ENCODE measurements at regions of chr12 and their contacts with region 1.

Region 1: GRCh38 chr12:130838951-130839769 is at the start of gene STX2:
- DNase-seq: peak; percentile 79
- H3K4me3 Mint-ChIP-seq: peak within 1 kb of the TSS; percentile 68
- H3K27ac Mint-ChIP-seq: no peak within 1 kb of the TSS
- H3K4me1 Mint-ChIP-seq: peaks cover 16% of the 10 kb centered on the region
- H3K27me3 Mint-ChIP-seq: no peaks in the 10 kb centered on the region
- CTCF ChIP-seq: peak; percentile 23
- total RNA-seq, gene STX2: 19.0 and 21.6 TPM in 2 replicates

Region 2: DNA sequence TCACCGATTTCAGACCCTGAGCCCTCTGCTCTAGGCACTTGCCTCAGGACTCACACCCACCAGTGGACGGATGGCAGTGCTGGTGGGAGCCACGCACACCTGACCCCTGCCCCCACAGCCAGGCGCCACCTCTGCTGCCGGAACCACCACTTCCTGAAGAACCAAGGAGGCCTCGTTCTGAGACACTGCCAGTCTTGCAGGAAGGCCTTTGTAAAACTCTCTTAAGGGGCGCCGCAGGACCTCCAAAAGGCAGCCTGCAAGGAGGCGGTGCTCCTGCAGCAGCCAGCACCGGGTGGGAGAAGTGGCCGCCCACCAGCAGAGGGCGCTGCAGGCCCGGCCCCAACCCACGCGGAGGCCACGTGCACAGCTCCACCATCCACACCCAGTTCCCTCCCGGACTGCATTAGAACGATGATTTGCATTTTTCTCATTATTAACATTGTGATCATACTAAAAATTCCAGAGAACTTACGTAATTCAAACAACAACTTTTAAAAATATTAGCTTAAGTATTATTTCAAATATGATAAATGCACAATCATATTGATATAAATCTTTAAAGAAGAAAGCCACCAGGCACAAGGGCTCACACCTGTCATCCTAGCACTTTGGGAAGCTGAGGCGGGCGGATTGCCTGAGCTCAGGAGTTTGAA is 12.9 kb before region 1 on chr12:
- CTCF ChIA-PET with region 1: interaction called, 20 read pairs
- POLR2A ChIA-PET with region 1: interaction called, 4 read pairs
- intact Hi-C with region 1: no loop called
- DNase-seq: peak; percentile 37
- H3K4me3 Mint-ChIP-seq: no peak overlapping the region
- H3K27ac Mint-ChIP-seq: no peak overlapping the region
- H3K4me1 Mint-ChIP-seq: no peaks in the 10 kb centered on the region
- H3K27me3 Mint-ChIP-seq: no peaks in the 10 kb centered on the region
- CTCF ChIP-seq: peak; percentile 38

Region 3: DNA sequence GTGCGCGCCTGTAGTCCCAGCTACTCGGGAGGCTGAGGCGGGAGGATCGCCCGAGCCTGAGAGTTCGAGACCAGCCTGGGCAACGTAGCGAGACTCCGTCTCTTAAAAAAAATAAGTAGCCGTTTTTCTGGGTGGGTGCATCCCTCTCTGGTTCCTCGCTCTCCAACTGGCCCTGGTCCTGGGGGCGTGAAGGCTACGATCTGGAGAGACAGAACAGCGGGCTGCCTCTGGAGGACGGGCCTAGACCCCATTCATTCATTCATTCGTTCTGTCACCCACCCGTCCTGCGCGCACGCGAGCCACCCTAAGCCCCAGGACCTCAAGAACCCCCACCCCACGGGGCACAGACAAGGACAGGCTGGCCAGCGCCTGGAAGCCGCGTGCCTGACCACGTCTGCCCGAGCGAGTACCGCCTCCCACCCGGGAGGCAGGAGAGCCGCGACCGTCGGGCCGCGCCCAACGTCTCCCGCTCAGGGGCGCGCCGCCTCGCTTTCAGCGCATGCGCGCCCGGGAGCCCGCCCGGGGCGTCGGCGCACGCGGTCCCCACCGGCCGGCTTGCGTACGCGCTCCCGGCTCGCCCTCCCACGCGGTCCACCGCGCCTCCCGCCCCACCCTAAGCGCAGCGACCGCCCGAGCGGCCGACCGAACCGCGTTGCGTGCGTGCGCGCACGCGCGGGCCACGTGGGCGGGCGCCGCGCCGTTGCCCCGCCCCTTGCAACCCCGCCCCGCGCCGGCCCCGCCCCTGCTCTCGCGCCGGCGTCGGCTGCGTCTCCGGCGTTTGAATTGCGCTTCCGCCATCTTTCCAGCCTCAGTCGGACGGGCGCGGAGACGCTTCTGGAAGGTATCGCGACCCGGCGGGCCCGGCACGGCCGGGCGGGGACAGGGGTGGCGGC is 32.4 kb after region 1 on chr12 and contains the start of gene RAN:
- CTCF ChIA-PET with region 1: interaction called, 3 read pairs
- POLR2A ChIA-PET with region 1: interaction called, 3 read pairs
- intact Hi-C with region 1: loop called (anchors 1 kb)
- DNase-seq: peak; percentile 89
- H3K4me3 Mint-ChIP-seq: peak within 1 kb of the TSS; percentile 88
- H3K27ac Mint-ChIP-seq: peak within 1 kb of the TSS; percentile 81
- H3K4me1 Mint-ChIP-seq: peaks cover 26% of the 10 kb centered on the region
- H3K27me3 Mint-ChIP-seq: no peaks in the 10 kb centered on the region
- CTCF ChIP-seq: no peak
- total RNA-seq, gene RAN: 1,362 and 1,467 TPM in 2 replicates